Pancreas (tissue), 10 donors: ENCODE measurements at regions of chr6 and their contacts with region 1.

Region 1: DNA sequence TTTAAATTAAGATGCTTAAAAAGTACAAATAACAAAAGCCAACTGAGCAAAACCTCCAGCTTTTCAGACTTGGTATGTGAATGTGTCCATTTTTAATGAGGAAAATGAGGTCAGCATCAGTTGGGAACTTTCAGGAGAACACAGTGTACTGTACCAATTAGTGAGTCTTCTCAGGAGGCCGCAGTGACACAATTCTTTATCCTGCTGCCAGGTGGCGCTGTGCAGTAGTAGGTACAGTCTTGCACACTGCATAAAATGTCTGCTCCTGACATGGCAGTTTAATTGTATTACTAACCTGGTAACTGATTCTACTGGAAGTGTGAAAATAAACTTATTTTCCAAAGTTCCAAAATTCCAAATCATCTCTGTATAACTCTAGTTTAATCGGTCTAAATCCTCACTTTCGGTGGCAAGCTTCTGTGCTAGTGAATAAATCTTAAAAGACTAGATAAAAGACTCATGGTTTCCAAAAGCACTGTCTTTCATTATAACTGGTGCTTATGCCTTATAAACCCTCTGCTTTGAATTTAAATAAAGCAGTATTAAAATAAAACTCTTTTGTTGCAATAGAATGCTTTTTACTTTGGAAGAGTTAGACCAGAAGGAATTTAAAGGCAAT is 214.8 kb upstream of the MMS22L start:
- DNase-seq: peak; percentile 31 to 72 (median 54)
- ATAC-seq: peak; percentile 80 to 98 (median 96)
- H3K4me3 ChIP-seq: no peak overlapping the region
- H3K27ac ChIP-seq: no peak overlapping the region
- H3K4me1 ChIP-seq: no peaks in the 10 kb centered on the region
- H3K27me3 ChIP-seq: peaks cover 0 to 5% (median 0%) of the 10 kb centered on the region in 4 donors
- CTCF ChIP-seq: peak; percentile 49 to 77 (median 69)

Region 2: DNA sequence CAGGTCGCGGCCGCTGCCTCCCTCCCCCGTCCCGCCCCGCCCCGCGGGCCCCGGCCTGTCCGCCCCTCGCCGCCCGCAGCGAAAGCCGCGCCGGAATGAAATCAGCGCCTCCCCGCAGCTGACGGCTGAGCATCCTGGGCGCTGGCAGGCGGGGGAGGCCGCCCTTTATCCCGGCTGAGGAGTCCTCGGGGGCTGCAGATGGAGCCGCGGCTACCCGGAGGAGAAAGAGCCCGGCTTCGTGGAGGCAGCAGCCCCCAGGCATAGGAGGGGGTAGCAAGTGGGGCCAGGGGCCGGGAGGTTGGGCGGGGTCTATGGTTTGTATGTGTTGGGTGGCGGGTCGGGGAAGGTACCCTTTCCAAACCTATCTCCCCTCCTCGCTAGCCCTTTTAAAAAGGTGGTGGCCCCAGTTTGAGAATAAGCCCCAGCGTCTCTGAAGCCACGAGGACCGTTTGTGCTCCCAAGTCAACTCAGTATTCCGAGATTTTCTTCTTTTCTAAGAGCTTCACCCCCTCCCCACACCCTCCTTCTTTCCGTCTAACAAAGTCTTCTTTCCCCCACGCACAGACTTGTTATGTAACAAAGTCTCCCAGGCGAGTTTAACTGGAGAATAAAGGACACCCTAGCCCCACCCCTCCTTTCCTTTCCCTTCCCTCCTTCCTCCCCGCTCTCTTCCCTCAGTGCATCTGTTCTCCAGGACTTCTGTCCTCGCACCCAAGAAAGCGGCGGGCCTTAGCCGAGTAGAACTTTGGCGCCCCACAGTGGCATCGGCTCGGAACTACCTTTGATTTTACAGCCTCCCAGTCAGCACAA is 1347.6 kb after region 1 on chr6:
- intact Hi-C with region 1: loop called in 2 of 3 experiments (anchors 10 kb)
- DNase-seq: peak; percentile 45 to 89 (median 75)
- ATAC-seq: peak; percentile 69 to 90 (median 90)
- H3K4me3 ChIP-seq: peak overlapping the region in 2 of 4 donors; percentile 12 to 37
- H3K27ac ChIP-seq: no peak overlapping the region
- H3K4me1 ChIP-seq: peaks cover 0 to 9% (median 8%) of the 10 kb centered on the region in 3 donors
- H3K27me3 ChIP-seq: peaks cover 0 to 67% (median 9%) of the 10 kb centered on the region in 4 donors
- CTCF ChIP-seq: peak; percentile 40 to 70 (median 63)

Region 3: DNA sequence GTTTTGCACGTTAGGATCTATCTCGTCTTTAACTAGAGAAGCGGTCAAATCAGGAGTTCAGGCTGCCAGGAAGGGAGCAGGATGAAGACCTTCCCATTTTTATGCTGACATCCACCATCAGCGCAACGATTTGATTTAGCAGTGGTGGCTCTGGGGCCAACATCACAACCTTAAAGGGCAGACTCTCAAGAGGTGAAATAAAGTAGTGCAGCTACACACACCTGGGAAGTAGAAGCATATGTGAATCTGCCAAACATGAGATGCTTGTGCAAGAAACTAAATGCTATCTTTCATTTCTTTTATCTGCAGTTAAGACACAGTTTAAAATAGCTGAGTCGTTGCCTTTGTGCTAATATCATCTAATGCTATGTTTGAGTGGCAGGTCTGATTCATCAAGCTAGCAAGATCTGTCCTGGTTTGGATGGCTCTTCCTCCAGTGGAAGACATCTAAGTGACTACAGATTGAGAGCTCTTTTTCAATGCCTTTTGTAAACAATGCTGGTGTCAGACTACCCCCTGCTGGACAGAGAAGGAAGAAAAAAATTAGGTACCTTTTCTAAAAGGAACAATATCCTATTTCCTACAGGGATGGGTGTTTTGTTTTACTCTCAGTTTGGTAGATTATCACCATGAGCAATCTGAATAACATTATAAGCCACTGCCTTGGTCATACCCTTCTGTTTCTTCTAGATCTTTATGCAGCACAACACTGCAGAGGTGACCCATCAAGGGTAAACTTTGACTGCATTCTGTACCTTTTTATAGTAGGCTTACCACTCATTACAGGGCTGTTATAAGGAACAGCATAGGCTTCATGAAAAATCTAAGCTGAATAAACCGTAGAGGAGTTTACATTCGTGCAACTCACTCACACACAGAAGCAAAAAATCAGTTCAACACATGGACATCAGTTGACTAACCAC is 1621.5 kb after region 1 on chr6:
- intact Hi-C with region 1: loop called in 1 of 3 experiments (anchors 10 kb)
- DNase-seq: peak in 1 of 6 donors; percentile 17
- ATAC-seq: peak in 3 of 4 donors; percentile 77 to 84 (median 79)
- H3K4me3 ChIP-seq: no peak overlapping the region
- H3K27ac ChIP-seq: no peak overlapping the region
- H3K4me1 ChIP-seq: peaks cover 0 to 4% (median 0%) of the 10 kb centered on the region in 3 donors
- H3K27me3 ChIP-seq: no peaks in the 10 kb centered on the region
- CTCF ChIP-seq: peak; percentile 32 to 58 (median 51)